HepG2 (cell line): ENCODE measurements at regions of chr7 and their contacts with region 1.

Region 1: DNA sequence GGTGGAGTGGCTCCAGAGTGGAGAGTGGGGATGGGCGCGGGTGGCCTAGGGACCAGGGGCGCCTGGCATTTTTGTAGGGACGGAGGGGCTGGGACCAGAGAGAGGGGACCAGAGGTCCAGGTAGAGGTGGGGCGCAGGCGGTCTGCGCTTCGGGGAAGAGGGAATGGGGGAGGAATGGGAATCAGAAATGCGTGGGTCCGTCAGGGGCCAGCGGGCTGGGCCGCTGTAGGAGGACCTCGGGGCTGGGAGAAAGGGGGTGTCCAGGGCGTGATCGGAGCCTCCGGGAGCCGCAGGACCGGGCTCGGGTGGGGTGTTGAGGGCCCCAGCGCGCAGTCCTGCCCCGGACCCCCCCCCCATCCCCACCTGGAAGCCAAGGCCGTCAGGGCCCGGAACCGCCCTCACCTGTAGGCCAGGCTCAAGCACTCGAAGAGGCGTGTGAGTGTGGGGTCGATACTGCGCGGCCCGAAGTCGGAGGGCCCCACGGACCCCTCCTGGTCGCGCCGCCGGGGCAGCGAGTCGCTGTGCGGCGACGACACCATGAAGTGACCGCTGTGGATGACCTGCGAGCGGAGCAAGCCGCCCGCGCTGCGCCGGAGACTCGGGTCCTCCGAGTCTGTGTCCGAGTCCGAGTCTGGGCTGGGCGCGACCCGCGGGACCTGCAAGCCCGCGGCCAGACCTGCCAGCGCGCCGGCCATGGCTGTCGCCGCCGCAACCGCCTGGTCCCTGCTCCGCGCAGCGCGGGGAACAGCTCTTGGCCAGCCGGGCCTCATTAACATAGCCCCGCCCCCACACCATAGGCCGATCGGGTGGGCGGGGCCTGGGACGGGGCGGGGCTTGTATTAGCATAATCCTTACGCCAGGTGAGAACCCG is at the start of gene MLXIPL:
- DNase-seq: peak; percentile 83
- ATAC-seq: peak; percentile 76
- H3K4me3 ChIP-seq: peak within 1 kb of the TSS; percentile 91 to 99 (median 97)
- H3K27ac ChIP-seq: peak within 1 kb of the TSS; percentile 95
- H3K4me1 ChIP-seq: peaks cover 47% of the 10 kb centered on the region
- H3K27me3 ChIP-seq: no peaks in the 10 kb centered on the region; a peak in 1 of 5 replicates
- CTCF ChIP-seq: no peak
- EP300 ChIP-seq: no peak
- POLR2A ChIP-seq: peak; percentile 96 to 99
- RAD21 ChIP-seq: peak; percentile 58
- total RNA-seq, gene MLXIPL: 17.2 and 51.6 TPM in 2 replicates

Region 2: DNA sequence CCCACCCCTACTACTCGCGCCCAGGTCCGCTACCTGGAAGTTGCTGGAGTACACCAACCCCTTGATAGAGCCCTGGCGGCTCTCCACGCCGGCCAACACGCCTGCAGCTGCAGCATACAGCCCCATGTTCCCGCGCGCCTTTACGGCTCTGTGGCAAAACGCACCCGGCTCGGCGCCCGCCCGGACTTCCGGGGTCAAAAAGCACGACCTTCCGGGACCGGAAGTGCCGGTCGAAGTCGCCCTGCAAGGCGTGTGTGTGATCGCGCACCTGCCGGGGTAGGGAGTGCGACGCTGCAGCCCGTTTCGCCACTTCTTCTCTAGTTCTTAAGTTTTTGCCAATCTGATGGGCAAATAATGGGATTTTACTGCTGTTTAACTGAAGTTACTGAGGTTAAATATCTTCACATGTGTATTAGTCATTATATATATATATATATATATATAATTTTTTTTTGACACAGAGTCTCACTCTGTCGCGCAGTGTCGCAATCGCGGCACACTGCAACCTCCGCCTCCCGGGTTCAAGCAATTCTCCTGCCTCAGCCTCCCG is 315.3 kb before region 1 on chr7 and contains the start of gene NSUN5:
- CTCF ChIA-PET with region 1: no interaction called
- POLR2A ChIA-PET with region 1: no interaction called
- in situ Hi-C with region 1: no loop called
- intact Hi-C with region 1: no loop called
- DNase-seq: peak; percentile 74
- ATAC-seq: peak; percentile 91
- H3K4me3 ChIP-seq: peak within 1 kb of the TSS; percentile 78 to 92 (median 82)
- H3K27ac ChIP-seq: peak within 1 kb of the TSS; percentile 33
- H3K4me1 ChIP-seq: peaks cover 22% of the 10 kb centered on the region
- H3K27me3 ChIP-seq: no peaks in the 10 kb centered on the region; a peak in 1 of 5 replicates
- CTCF ChIP-seq: no peak
- EP300 ChIP-seq: no peak
- POLR2A ChIP-seq: peak; percentile 76 to 87
- RAD21 ChIP-seq: no peak
- total RNA-seq, gene NSUN5: 31.6 and 35.8 TPM in 2 replicates

Region 3: GRCh38 chr7:73606801-73607691 is 17.0 kb before region 1 on chr7:
- CTCF ChIA-PET with region 1: interaction called, 3 read pairs
- POLR2A ChIA-PET with region 1: interaction called, 416 read pairs
- in situ Hi-C with region 1: no loop called
- intact Hi-C with region 1: no loop called
- DNase-seq: peak; percentile 33
- ATAC-seq: peak; percentile 40
- H3K4me3 ChIP-seq: no peak overlapping the region
- H3K27ac ChIP-seq: no peak overlapping the region
- H3K4me1 ChIP-seq: peaks cover 42% of the 10 kb centered on the region
- H3K27me3 ChIP-seq: no peaks in the 10 kb centered on the region
- CTCF ChIP-seq: peak; percentile 91
- EP300 ChIP-seq: no peak
- POLR2A ChIP-seq: peak in 1 of 2 experiments; percentile 25; a peak in 2 of 4 replicates
- RAD21 ChIP-seq: peak; percentile 88

Region 4: GRCh38 chr7:73647725-73648592 is 23.9 kb after region 1 on chr7:
- CTCF ChIA-PET with region 1: no interaction called
- POLR2A ChIA-PET with region 1: interaction called, 10 read pairs
- in situ Hi-C with region 1: no loop called
- intact Hi-C with region 1: no loop called
- DNase-seq: peak; percentile 41
- ATAC-seq: peak; percentile 80
- H3K4me3 ChIP-seq: peak overlapping the region; percentile 45 to 73 (median 60)
- H3K27ac ChIP-seq: peak overlapping the region; percentile 30
- H3K4me1 ChIP-seq: peaks cover 79% of the 10 kb centered on the region
- H3K27me3 ChIP-seq: peaks cover 3 to 12% of the 10 kb centered on the region in 2 experiments; a peak in 3 of 5 replicates
- CTCF ChIP-seq: peak; percentile 54
- EP300 ChIP-seq: peak in 1 of 2 experiments; percentile 62; a peak in 2 of 4 replicates
- POLR2A ChIP-seq: peak; percentile 52 to 55; a peak in 3 of 4 replicates
- RAD21 ChIP-seq: peak; percentile 87

Region 5: DNA sequence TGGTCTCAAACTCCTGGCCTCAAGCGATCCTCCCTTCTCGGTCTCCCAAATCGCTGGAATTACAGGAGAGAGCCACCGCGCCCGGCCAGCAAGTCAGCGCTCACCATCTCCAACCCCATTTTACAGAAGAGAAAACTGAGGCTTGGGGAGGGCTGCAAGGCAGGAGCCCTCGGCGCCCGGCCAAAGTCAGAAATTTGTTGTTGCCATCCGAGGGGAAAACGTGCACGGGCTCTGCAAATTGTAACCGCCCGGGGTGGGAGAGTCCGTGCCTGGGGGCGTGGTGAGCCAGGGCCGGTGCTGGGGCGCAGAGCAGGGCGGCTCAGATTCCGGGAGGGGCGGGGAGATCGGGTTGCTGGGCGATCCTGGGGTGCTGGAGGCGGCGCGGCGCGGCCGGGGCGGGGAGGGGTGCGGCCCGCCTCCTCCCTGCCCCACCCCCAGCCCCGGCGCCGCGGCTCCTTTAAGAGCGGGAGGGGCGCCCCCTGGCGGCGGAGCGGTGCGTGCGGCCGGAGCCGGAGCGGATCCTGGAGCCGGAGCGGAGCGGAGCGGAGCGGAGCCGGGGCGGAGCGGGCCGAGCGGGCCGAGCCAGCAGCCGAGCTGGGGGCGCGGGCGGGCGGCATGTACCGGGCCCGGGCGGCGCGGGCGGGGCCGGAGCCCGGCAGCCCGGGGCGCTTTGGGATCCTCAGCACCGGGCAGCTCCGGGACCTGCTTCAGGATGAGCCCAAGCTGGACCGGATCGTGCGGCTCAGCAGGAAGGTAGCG is 43.5 kb after region 1 on chr7 and contains the start of gene VPS37D:
- CTCF ChIA-PET with region 1: interaction called, 3 read pairs
- POLR2A ChIA-PET with region 1: interaction called, 67 read pairs
- in situ Hi-C with region 1: no loop called
- intact Hi-C with region 1: loop called (anchors 2 kb)
- DNase-seq: peak; percentile 67
- ATAC-seq: peak; percentile 71
- H3K4me3 ChIP-seq: peak within 1 kb of the TSS; percentile 68 to 84 (median 77)
- H3K27ac ChIP-seq: peak within 1 kb of the TSS; percentile 94
- H3K4me1 ChIP-seq: peaks cover 48% of the 10 kb centered on the region
- H3K27me3 ChIP-seq: no peaks in the 10 kb centered on the region; a peak in 1 of 5 replicates
- CTCF ChIP-seq: peak; percentile 79
- EP300 ChIP-seq: no peak
- POLR2A ChIP-seq: no peak
- RAD21 ChIP-seq: peak; percentile 97
- total RNA-seq, gene VPS37D: 4.9 and 6.3 TPM in 2 replicates

Region 6: GRCh38 chr7:73718905-73719805 is 95.1 kb after region 1 on chr7 and contains the start of gene STX1A:
- CTCF ChIA-PET with region 1: no interaction called
- POLR2A ChIA-PET with region 1: interaction called, 11 read pairs
- in situ Hi-C with region 1: no loop called
- intact Hi-C with region 1: loop called (anchors 2 kb)
- DNase-seq: peak; percentile 40
- ATAC-seq: peak; percentile 67
- H3K4me3 ChIP-seq: peak within 1 kb of the TSS; percentile 76 to 87 (median 87)
- H3K27ac ChIP-seq: no peak within 1 kb of the TSS
- H3K4me1 ChIP-seq: peaks cover 47% of the 10 kb centered on the region
- H3K27me3 ChIP-seq: peaks cover 0 to 1% of the 10 kb centered on the region in 2 experiments; a peak in 1 of 5 replicates
- CTCF ChIP-seq: no peak
- EP300 ChIP-seq: no peak
- POLR2A ChIP-seq: peak in 1 of 2 experiments; percentile 67; a peak in 1 of 4 replicates
- RAD21 ChIP-seq: 0 out of 2 replicates have a peak, but pooled peaks have one; percentile 24
- total RNA-seq, gene STX1A: 2.9 and 6.1 TPM in 2 replicates

Region 7: DNA sequence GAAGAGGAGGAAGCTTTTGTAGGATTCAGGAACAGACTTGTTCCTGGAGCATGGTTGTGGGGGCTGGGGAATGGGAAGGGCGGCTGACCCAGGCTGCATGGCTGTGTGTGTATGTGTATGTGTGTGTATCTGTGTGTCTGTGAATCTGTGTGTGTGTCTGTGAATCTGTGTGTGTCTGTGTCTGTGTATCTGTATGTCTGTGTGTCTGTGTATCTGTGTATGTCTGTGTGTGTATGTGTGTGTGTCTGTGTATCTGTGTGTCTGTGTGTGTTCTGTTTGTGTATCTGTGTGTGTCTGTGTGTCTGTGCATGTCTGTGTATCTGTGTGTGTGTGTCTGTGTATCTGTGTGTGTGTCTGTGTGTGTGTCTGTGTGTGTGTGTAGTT is 102.0 kb after region 1 on chr7:
- CTCF ChIA-PET with region 1: interaction called, 5 read pairs
- POLR2A ChIA-PET with region 1: interaction called, 3 read pairs
- in situ Hi-C with region 1: no loop called
- intact Hi-C with region 1: loop called (anchors 2 kb)
- DNase-seq: no peak
- ATAC-seq: peak; percentile 56
- H3K4me3 ChIP-seq: no peak overlapping the region
- H3K27ac ChIP-seq: no peak overlapping the region
- H3K4me1 ChIP-seq: peaks cover 10% of the 10 kb centered on the region; the same call in 1 of the 2 replicates
- H3K27me3 ChIP-seq: no peaks in the 10 kb centered on the region; a peak in 2 of 5 replicates
- CTCF ChIP-seq: no peak
- EP300 ChIP-seq: no peak
- POLR2A ChIP-seq: no peak
- RAD21 ChIP-seq: no peak

Region 8: DNA sequence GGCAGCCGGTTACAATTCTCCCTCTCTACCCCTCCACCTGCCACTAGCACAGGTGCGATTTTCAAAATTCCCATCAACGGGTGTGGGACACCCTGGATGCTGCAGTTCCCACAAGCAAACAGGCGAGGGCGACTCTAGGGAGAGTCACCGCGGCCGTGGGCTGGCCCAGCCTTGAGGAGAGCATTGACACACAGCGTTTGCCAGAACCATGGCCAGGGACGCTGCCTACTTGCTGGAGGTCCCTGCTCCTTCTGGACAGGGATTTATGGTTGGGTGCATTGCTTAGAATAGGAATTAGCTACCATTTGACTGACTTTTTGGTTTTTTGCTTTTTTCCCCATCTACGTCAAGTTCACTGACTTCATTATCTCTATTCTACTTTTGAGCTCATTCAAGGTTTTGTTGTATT is 187.7 kb after region 1 on chr7:
- CTCF ChIA-PET with region 1: no interaction called
- POLR2A ChIA-PET with region 1: no interaction called
- in situ Hi-C with region 1: no loop called
- intact Hi-C with region 1: no loop called
- DNase-seq: peak; percentile 54
- ATAC-seq: peak; percentile 98
- H3K4me3 ChIP-seq: no peak overlapping the region
- H3K27ac ChIP-seq: no peak overlapping the region
- H3K4me1 ChIP-seq: no peaks in the 10 kb centered on the region
- H3K27me3 ChIP-seq: peaks cover 0 to 1% of the 10 kb centered on the region in 2 experiments; a peak in 2 of 5 replicates
- CTCF ChIP-seq: peak; percentile 92
- EP300 ChIP-seq: no peak
- POLR2A ChIP-seq: no peak
- RAD21 ChIP-seq: peak; percentile 80

Region 9: GRCh38 chr7:73885975-73886798 is 262.2 kb after region 1 on chr7:
- CTCF ChIA-PET with region 1: no interaction called
- POLR2A ChIA-PET with region 1: no interaction called
- in situ Hi-C with region 1: no loop called
- intact Hi-C with region 1: no loop called
- DNase-seq: no peak
- ATAC-seq: peak; percentile 49
- H3K4me3 ChIP-seq: no peak overlapping the region
- H3K27ac ChIP-seq: no peak overlapping the region
- H3K4me1 ChIP-seq: peaks cover 24% of the 10 kb centered on the region
- H3K27me3 ChIP-seq: peaks cover 1 to 28% of the 10 kb centered on the region in 2 experiments; a peak in 4 of 5 replicates
- CTCF ChIP-seq: no peak
- EP300 ChIP-seq: no peak
- POLR2A ChIP-seq: no peak
- RAD21 ChIP-seq: no peak